ENCODE measurements at regions of chr18 and their contacts with region 1.

Region 1: DNA sequence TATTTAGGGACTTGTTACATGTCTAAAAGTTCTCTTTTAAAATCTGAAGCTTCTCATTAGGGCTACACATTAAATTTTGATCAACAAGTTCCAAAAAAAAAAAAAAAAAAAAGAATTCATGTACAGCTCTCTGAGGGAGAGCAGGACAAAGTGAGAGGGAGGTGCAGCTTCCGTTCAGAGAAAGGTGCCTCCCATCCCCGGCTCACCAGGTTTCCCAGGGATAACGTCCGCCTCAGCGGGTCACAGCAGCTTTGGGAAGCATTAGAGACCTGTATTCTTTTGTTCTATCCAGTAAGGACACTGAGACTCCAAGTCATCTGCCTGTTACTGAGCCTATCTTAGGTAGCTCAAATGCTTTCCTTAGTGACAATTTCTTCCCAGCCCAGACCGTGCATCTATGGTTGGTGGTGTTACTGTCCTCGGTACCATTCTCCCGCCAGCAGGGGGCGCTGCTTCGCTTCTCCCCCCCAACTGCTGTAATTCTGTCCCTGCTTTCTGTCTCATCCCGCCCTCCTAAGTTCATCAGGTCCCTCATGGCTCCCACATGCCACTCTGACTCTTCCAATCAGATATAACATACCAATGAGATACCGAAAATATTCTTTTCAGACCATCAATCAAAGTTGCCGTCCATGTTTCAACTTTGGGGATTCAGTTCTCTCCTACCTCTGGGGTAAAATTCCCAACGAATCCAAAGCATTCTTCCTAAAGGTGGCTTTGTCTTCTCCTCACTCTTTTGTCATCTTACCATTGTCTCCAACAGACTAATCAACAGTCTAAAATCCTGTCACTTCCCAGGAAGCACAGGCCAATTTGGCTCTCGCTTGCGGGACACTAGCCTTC is 466.5 kb downstream of the METTL4 start:
- DNase-seq: peak in 1 of 2 experiments; percentile 85
- H3K4me3 ChIP-seq: no peak overlapping the region
- H3K27ac ChIP-seq: no peak overlapping the region
- H3K4me1 ChIP-seq: no peaks in the 10 kb centered on the region
- H3K27me3 ChIP-seq: no peaks in the 10 kb centered on the region
- CTCF ChIP-seq: peak; percentile 68 to 87 (median 86)
- EP300 ChIP-seq: no peak
- POLR2A ChIP-seq: no peak
- RAD21 ChIP-seq: peak; percentile 68 to 74

Region 2: GRCh38 chr18:2040279-2040678 is 64.6 kb before region 1 on chr18:
- CTCF ChIA-PET with region 1: no interaction called
- POLR2A ChIA-PET with region 1: no interaction called
- DNase-seq: no peak
- H3K4me3 ChIP-seq: no peak overlapping the region
- H3K27ac ChIP-seq: no peak overlapping the region
- H3K4me1 ChIP-seq: no peaks in the 10 kb centered on the region
- H3K27me3 ChIP-seq: no peaks in the 10 kb centered on the region
- CTCF ChIP-seq: no peak
- EP300 ChIP-seq: no peak
- POLR2A ChIP-seq: no peak
- RAD21 ChIP-seq: no peak

Region 3: DNA sequence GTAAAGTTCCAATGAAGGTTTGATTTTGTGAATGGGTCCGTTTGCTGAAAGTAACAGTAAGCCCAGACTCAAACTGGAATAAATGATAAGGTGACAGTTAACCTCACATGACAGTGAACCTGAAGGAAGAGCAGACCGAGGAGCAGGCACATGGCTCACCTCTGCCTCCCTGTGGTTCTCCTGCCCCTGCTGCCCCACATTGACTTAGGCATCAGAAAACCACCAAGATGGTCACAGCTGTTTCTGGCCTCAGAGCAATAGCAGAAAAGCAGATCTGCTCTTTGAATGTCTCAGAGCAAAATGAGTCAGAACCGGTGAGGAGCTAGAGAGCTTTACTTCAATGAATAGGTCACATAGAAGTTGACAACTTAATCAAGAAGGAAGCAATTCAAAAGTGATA is 21.1 kb before region 1 on chr18:
- CTCF ChIA-PET with region 1: interaction called, 21 read pairs
- POLR2A ChIA-PET with region 1: no interaction called
- DNase-seq: no peak
- H3K4me3 ChIP-seq: no peak overlapping the region
- H3K27ac ChIP-seq: no peak overlapping the region
- H3K4me1 ChIP-seq: no peaks in the 10 kb centered on the region
- H3K27me3 ChIP-seq: no peaks in the 10 kb centered on the region
- CTCF ChIP-seq: peak; percentile 80 to 89 (median 82)
- EP300 ChIP-seq: no peak
- POLR2A ChIP-seq: no peak
- RAD21 ChIP-seq: peak; percentile 88 to 90

Region 4: DNA sequence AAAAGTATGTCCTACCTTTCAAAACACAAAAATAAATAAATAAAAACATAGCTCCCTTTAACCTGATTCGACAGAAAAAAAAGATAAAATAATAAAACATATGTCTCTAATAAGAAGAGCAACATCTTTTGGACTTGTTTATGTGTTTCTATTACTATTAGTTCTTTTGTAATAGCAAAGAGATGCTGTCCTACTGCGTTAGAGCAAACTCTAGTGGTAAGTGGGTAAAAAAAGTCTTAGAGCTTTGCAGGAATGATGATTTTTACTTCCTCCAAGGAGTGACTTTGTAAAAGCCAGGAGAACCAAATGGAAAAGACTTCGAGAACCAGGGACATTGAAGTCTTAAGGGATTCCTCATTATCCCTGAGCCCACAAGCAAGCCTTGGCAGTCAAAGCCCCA is 16.4 kb after region 1 on chr18:
- CTCF ChIA-PET with region 1: interaction called, 32 read pairs
- POLR2A ChIA-PET with region 1: no interaction called
- DNase-seq: no peak
- H3K4me3 ChIP-seq: no peak overlapping the region
- H3K27ac ChIP-seq: no peak overlapping the region
- H3K4me1 ChIP-seq: no peaks in the 10 kb centered on the region
- H3K27me3 ChIP-seq: peaks cover 0 to 1% (median 0%) of the 10 kb centered on the region in 4 experiments; a peak in 1 of 7 replicates
- CTCF ChIP-seq: no peak
- EP300 ChIP-seq: no peak
- POLR2A ChIP-seq: no peak
- RAD21 ChIP-seq: peak; percentile 30 to 45

Region 5: DNA sequence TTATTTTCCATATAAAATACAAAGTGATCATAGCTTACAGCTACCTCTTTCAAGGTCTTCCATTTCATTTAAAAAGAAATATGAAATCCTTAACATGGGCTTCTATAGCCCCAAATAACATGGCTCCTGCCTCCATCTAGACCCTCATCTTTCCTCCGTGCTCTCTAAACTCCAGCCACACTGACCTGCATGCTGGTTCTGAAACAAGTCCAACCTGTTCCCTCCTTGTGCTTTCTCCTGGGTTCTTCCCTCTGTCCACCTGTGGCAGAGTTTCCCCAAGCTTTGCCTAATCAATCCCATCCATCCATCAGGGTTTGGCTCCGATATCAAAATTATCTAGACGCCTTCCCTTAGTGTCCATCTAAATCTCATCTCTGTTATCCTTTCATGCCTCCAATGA is 22.7 kb after region 1 on chr18:
- CTCF ChIA-PET with region 1: interaction called, 32 read pairs
- POLR2A ChIA-PET with region 1: no interaction called
- DNase-seq: no peak
- H3K4me3 ChIP-seq: no peak overlapping the region
- H3K27ac ChIP-seq: no peak overlapping the region
- H3K4me1 ChIP-seq: peaks cover 0 to 2% (median 0%) of the 10 kb centered on the region in 4 experiments; a peak in 1 of 7 replicates
- H3K27me3 ChIP-seq: no peaks in the 10 kb centered on the region
- CTCF ChIP-seq: no peak
- EP300 ChIP-seq: no peak
- POLR2A ChIP-seq: no peak
- RAD21 ChIP-seq: no peak

Region 6: DNA sequence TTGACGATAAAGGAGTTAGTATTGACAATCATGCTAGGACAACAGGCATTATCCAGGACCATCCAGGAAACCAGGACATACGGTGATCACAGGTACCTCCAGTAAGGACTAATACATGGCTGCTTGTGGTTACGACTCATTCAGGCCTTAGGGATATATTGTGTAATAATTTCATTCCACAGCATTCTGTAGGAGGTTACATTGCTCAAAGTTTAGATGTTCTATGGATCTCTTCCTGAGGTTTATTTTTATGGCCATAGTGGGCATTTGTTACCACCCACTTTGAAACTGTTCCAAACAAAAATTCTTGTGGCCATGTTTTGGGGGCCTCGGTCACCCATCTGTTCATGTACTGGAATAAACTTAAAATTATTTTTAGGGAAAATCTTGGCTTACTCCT is 34.9 kb after region 1 on chr18:
- CTCF ChIA-PET with region 1: interaction called, 13 read pairs
- POLR2A ChIA-PET with region 1: no interaction called
- DNase-seq: no peak
- H3K4me3 ChIP-seq: no peak overlapping the region
- H3K27ac ChIP-seq: no peak overlapping the region
- H3K4me1 ChIP-seq: no peaks in the 10 kb centered on the region
- H3K27me3 ChIP-seq: no peaks in the 10 kb centered on the region
- CTCF ChIP-seq: no peak
- EP300 ChIP-seq: no peak
- POLR2A ChIP-seq: no peak
- RAD21 ChIP-seq: no peak

Region 7: DNA sequence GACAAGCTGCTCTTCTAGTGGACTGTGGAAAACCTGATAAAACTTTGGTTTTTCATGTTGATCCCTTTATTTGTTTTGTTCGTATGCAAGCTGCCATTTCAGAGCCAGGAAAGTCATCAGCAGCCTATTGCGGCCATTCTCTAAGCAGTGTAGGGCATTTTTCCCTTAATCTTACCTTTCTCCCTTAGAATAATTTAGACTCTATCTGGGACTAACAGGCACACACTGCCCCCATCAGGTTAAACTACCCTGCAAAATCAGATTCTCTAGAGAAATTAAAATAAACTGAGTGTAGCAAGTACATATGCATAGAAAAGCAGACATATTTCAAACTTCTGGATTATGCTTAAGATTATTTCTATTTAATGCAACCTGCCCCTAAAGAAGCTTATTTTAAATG is 119.0 kb after region 1 on chr18:
- CTCF ChIA-PET with region 1: interaction called, 50 read pairs
- POLR2A ChIA-PET with region 1: no interaction called
- DNase-seq: peak in 1 of 2 experiments; percentile 51
- H3K4me3 ChIP-seq: no peak overlapping the region
- H3K27ac ChIP-seq: no peak overlapping the region
- H3K4me1 ChIP-seq: no peaks in the 10 kb centered on the region
- H3K27me3 ChIP-seq: no peaks in the 10 kb centered on the region; a peak in 1 of 7 replicates
- CTCF ChIP-seq: peak in 2 of 3 experiments; percentile 28 to 50; a peak in 2 of 4 replicates
- EP300 ChIP-seq: no peak
- POLR2A ChIP-seq: no peak
- RAD21 ChIP-seq: peak; percentile 70 to 79

Region 8: GRCh38 chr18:2360861-2361260 is 256.0 kb after region 1 on chr18:
- CTCF ChIA-PET with region 1: no interaction called
- POLR2A ChIA-PET with region 1: no interaction called
- DNase-seq: no peak
- H3K4me3 ChIP-seq: no peak overlapping the region
- H3K27ac ChIP-seq: no peak overlapping the region
- H3K4me1 ChIP-seq: no peaks in the 10 kb centered on the region
- H3K27me3 ChIP-seq: no peaks in the 10 kb centered on the region
- CTCF ChIP-seq: no peak
- EP300 ChIP-seq: no peak
- POLR2A ChIP-seq: no peak
- RAD21 ChIP-seq: no peak

Measured in H1 (cell line).